HEK293 (cell line): ENCODE measurements at regions of chr1 and their contacts with region 1.

Region 1: DNA sequence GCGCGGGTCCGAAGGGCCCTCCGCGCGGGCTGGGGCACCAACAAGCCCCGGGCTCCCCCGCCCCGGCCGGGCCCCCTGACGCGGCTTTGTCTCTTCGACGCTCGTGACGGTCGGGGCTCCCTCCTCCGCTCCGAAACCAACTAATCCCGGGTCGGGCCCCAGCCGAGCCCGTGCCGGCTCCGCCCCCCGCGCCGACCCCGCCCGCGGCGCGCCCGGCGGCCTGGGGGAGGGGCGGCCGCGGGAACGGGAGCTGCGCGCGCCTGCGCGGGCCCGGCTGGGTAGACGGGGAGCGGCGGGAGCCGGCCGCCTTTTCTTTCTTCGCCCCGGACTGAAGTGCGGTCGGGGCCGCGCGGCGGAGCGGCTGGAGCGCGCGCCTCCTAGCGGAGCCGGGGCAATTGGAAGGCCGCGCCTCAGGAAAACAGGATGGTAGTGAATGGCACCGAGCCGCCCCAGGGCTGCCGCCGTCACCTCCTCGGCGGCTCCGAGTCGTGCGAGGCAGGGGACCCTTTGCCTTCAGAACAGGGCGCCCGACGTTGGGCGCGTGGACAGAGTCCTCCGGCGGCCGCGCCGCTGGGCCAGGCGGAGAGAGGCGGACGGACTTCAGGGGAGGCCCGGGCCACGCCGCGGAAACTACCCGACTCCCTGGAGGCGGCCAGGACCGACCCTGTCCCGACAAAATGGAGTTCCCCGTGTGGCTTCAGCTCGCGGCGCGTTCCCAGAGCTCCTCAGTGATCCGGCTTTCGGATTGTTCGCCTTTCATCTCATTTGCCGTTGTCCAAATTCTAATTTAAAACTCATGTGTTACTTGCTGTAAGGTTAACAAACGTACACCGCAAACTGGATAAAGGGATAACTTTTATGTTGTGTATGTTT is at the start of gene TP53BP2:
- H3K4me3 ChIP-seq: peak within 1 kb of the TSS; percentile 96
- H3K27ac ChIP-seq: peak within 1 kb of the TSS; percentile 99
- H3K4me1 ChIP-seq: peaks cover 10% of the 10 kb centered on the region
- CTCF ChIP-seq: peak; percentile 99

Region 2: GRCh38 chr1:223796210-223796609 is 49.8 kb before region 1 on chr1:
- CTCF ChIA-PET with region 1: no interaction called
- POLR2A ChIA-PET with region 1: no interaction called
- H3K4me3 ChIP-seq: no peak overlapping the region
- H3K27ac ChIP-seq: no peak overlapping the region
- H3K4me1 ChIP-seq: no peaks in the 10 kb centered on the region
- CTCF ChIP-seq: no peak

Region 3: GRCh38 chr1:223811634-223812415 is 34.2 kb before region 1 on chr1:
- CTCF ChIA-PET with region 1: interaction called, 17 read pairs
- POLR2A ChIA-PET with region 1: interaction called, 7 read pairs
- H3K4me3 ChIP-seq: no peak overlapping the region
- H3K27ac ChIP-seq: no peak overlapping the region
- H3K4me1 ChIP-seq: no peaks in the 10 kb centered on the region
- CTCF ChIP-seq: peak; percentile 63; the same call in 1 of the 2 replicates

Region 4: DNA sequence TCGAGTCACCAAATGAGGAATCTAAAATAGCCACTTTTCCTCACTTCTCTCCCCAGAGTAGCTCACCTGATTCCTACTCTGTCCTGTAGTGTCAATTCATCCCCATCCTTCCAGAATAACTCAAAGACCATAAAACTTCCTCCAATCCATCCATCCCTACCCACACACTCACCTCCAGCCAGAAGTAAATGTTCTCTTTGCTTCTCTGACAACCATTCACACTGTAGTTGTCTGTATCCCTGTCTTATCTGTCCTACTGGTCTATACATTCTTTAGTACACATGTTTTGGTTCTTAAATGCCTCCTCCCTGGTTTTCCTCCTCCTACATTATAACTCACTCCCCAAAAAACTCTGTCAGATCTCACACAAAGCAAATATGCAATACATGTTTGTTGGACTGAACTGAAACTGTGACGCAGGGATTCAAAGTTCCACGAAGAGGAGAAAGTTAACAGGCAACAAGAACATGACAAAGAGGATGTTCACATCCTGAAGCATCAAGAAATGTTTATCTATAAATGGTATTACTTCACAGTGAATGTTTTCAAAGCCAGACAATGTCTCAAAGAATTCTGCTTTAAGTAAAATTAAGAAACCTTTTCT is 11.3 kb before region 1 on chr1:
- CTCF ChIA-PET with region 1: interaction called, 5 read pairs
- POLR2A ChIA-PET with region 1: interaction called, 18 read pairs
- H3K4me3 ChIP-seq: no peak overlapping the region
- H3K27ac ChIP-seq: no peak overlapping the region
- H3K4me1 ChIP-seq: peaks cover 44% of the 10 kb centered on the region
- CTCF ChIP-seq: no peak

Region 5: GRCh38 chr1:223860051-223860622 is 14.1 kb after region 1 on chr1:
- CTCF ChIA-PET with region 1: interaction called, 12 read pairs
- POLR2A ChIA-PET with region 1: interaction called, 21 read pairs
- H3K4me3 ChIP-seq: no peak overlapping the region
- H3K27ac ChIP-seq: no peak overlapping the region
- H3K4me1 ChIP-seq: peaks cover 9% of the 10 kb centered on the region
- CTCF ChIP-seq: no peak